H1 (cell line): ENCODE measurements at regions of chr20 and their contacts with region 1.

Region 1: GRCh38 chr20:21529863-21530262 is 16.0 kb upstream of the NKX2-2 start:
- DNase-seq: no peak
- H3K4me3 ChIP-seq: no peak overlapping the region
- H3K27ac ChIP-seq: no peak overlapping the region
- H3K4me1 ChIP-seq: peaks cover 0 to 8% (median 0%) of the 10 kb centered on the region in 4 experiments; a peak in 2 of 7 replicates
- H3K27me3 ChIP-seq: peaks cover 9 to 25% (median 15%) of the 10 kb centered on the region in 4 experiments
- CTCF ChIP-seq: peak in 2 of 3 experiments; percentile 51 to 62; a peak in 3 of 4 replicates
- EP300 ChIP-seq: no peak
- POLR2A ChIP-seq: no peak
- RAD21 ChIP-seq: peak; percentile 36 to 51; a peak in 3 of 4 replicates

Region 2: GRCh38 chr20:20849161-20849560 is 680.7 kb before region 1 on chr20:
- CTCF ChIA-PET with region 1: no interaction called
- POLR2A ChIA-PET with region 1: no interaction called
- DNase-seq: no peak
- H3K4me3 ChIP-seq: no peak overlapping the region
- H3K27ac ChIP-seq: no peak overlapping the region
- H3K4me1 ChIP-seq: no peaks in the 10 kb centered on the region
- H3K27me3 ChIP-seq: peaks cover 0 to 2% (median 0%) of the 10 kb centered on the region in 4 experiments; a peak in 1 of 7 replicates
- CTCF ChIP-seq: no peak
- EP300 ChIP-seq: no peak
- POLR2A ChIP-seq: no peak
- RAD21 ChIP-seq: no peak

Region 3: GRCh38 chr20:21323640-21324039 is 206.2 kb before region 1 on chr20:
- CTCF ChIA-PET with region 1: no interaction called
- POLR2A ChIA-PET with region 1: no interaction called
- DNase-seq: no peak
- H3K4me3 ChIP-seq: no peak overlapping the region
- H3K27ac ChIP-seq: no peak overlapping the region
- H3K4me1 ChIP-seq: peaks cover 1 to 10% (median 9%) of the 10 kb centered on the region in 4 experiments; a peak in 5 of 7 replicates
- H3K27me3 ChIP-seq: no peaks in the 10 kb centered on the region
- CTCF ChIP-seq: no peak
- EP300 ChIP-seq: no peak
- POLR2A ChIP-seq: no peak
- RAD21 ChIP-seq: no peak

Region 4: DNA sequence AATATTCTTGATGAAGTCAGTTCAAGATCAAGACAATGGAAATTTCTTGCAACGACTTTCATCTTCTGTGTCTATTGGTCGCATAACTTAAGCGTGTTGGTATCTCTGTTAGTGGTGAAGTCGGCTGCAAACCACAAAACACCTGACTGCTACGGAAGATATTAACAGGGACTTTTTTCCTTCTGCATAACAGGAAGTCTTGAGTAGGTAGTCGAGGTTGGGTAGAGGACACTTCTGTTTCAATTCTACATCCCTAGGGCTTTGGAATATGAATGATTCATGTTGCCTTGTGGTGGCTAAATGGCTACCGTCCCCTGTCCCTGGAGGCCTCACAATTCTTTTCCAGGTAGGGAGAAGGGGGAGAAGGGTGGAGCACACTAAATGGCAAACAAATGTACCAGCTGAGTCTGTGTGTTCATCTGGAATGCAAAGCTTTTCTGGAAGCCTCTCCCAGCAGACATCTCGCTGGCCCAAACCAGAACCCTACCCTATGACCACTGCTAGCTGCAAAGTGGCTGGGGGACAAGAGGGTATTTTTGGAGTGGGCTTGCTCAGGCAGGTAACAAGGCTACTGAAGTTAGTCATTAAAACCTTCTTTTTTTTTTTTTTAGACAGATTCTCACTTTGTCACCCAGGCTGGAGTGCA is 18.6 kb after region 1 on chr20:
- CTCF ChIA-PET with region 1: interaction called, 19 read pairs
- POLR2A ChIA-PET with region 1: no interaction called
- DNase-seq: no peak
- H3K4me3 ChIP-seq: no peak overlapping the region
- H3K27ac ChIP-seq: no peak overlapping the region
- H3K4me1 ChIP-seq: no peaks in the 10 kb centered on the region
- H3K27me3 ChIP-seq: no peaks in the 10 kb centered on the region
- CTCF ChIP-seq: no peak
- EP300 ChIP-seq: no peak
- POLR2A ChIP-seq: no peak
- RAD21 ChIP-seq: no peak

Region 5: DNA sequence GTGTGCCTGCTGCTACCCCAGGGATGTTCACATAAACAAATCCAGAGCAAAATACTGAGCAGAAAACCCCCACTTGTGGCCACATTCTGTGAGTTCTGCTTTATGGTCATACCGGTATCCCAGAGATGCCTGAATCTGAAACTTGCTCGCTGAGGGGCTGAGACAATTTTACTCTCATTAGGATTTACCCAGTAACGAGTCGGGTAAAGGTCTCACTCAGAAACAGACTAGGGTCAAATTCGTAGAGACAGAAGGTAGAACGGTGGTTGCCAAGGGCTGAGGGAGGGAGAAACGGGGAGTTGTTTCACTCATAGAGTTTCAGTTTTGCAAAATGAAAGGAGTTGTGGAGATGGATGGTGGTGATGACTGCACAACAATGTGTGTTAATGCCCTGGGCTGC is 29.4 kb after region 1 on chr20:
- CTCF ChIA-PET with region 1: interaction called, 11 read pairs
- POLR2A ChIA-PET with region 1: no interaction called
- DNase-seq: no peak
- H3K4me3 ChIP-seq: no peak overlapping the region
- H3K27ac ChIP-seq: no peak overlapping the region
- H3K4me1 ChIP-seq: peaks cover 0 to 7% (median 0%) of the 10 kb centered on the region in 4 experiments; a peak in 3 of 7 replicates
- H3K27me3 ChIP-seq: no peaks in the 10 kb centered on the region
- CTCF ChIP-seq: no peak
- EP300 ChIP-seq: no peak
- POLR2A ChIP-seq: no peak
- RAD21 ChIP-seq: no peak

Region 6: GRCh38 chr20:21577551-21577950 is 47.7 kb after region 1 on chr20:
- CTCF ChIA-PET with region 1: interaction called, 79 read pairs
- POLR2A ChIA-PET with region 1: no interaction called
- DNase-seq: no peak
- H3K4me3 ChIP-seq: no peak overlapping the region
- H3K27ac ChIP-seq: no peak overlapping the region
- H3K4me1 ChIP-seq: no peaks in the 10 kb centered on the region
- H3K27me3 ChIP-seq: peaks cover 0 to 1% (median 0%) of the 10 kb centered on the region in 4 experiments; a peak in 1 of 7 replicates
- CTCF ChIP-seq: no peak
- EP300 ChIP-seq: no peak
- POLR2A ChIP-seq: no peak
- RAD21 ChIP-seq: no peak